ENCODE measurements at regions of chr13 and their contacts with region 1.

Region 1: GRCh38 chr13:42039946-42040729 is 8.3 kb upstream of the DGKH start:
- DNase-seq: peak; percentile 76
- ATAC-seq: peak; percentile 61
- H3K4me3 ChIP-seq: peak overlapping the region; percentile 77
- H3K27ac ChIP-seq: peak overlapping the region; percentile 67
- H3K4me1 ChIP-seq: peaks cover 22% of the 10 kb centered on the region
- H3K27me3 ChIP-seq: no peaks in the 10 kb centered on the region
- CTCF ChIP-seq: no peak

Region 2: GRCh38 chr13:41827507-41828213 is 212.5 kb before region 1 on chr13:
- CTCF ChIA-PET with region 1: no interaction called
- POLR2A ChIA-PET with region 1: no interaction called
- intact Hi-C with region 1: loop called (anchors 10 kb)
- DNase-seq: peak; percentile 88
- ATAC-seq: peak; percentile 96
- H3K4me3 ChIP-seq: no peak overlapping the region
- H3K27ac ChIP-seq: peak overlapping the region; percentile 53
- H3K4me1 ChIP-seq: peaks cover 20% of the 10 kb centered on the region
- H3K27me3 ChIP-seq: no peaks in the 10 kb centered on the region
- CTCF ChIP-seq: no peak

Region 3: DNA sequence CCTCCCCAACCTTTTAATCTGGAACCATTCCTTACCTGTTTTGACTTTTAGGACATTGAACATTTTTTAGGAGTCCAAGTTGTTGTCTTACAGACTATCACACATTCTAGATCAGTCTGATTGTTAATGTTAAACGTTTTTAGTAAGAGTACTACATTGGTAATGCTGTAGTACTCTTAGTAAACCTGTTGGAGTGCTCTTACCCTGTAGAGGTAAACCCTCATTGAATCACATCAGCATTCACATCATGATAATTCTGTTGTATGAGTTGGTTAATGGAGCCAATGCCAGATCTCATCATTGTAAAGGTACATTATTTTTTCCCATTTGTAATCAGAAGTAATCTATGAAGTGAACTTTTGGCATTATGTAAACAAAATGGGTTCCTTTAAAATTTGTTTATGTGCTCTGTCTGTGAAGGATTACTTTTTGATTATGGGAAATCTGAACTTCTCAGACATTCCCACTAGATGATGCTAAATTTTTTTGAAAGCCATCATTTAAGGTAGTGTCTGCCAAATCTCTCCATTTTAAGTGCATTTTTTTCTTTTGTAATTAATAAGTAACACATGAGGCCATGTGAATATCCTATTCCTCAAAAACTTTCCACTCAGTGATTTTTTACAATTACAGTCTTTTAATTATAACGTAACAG is 134.4 kb before region 1 on chr13:
- CTCF ChIA-PET with region 1: interaction called, 3 read pairs
- POLR2A ChIA-PET with region 1: interaction called, 4 read pairs
- intact Hi-C with region 1: loop called (anchors 1 kb)
- DNase-seq: peak; percentile 54
- ATAC-seq: peak; percentile 85
- H3K4me3 ChIP-seq: no peak overlapping the region
- H3K27ac ChIP-seq: no peak overlapping the region
- H3K4me1 ChIP-seq: no peaks in the 10 kb centered on the region
- H3K27me3 ChIP-seq: no peaks in the 10 kb centered on the region
- CTCF ChIP-seq: peak; percentile 72

Region 4: DNA sequence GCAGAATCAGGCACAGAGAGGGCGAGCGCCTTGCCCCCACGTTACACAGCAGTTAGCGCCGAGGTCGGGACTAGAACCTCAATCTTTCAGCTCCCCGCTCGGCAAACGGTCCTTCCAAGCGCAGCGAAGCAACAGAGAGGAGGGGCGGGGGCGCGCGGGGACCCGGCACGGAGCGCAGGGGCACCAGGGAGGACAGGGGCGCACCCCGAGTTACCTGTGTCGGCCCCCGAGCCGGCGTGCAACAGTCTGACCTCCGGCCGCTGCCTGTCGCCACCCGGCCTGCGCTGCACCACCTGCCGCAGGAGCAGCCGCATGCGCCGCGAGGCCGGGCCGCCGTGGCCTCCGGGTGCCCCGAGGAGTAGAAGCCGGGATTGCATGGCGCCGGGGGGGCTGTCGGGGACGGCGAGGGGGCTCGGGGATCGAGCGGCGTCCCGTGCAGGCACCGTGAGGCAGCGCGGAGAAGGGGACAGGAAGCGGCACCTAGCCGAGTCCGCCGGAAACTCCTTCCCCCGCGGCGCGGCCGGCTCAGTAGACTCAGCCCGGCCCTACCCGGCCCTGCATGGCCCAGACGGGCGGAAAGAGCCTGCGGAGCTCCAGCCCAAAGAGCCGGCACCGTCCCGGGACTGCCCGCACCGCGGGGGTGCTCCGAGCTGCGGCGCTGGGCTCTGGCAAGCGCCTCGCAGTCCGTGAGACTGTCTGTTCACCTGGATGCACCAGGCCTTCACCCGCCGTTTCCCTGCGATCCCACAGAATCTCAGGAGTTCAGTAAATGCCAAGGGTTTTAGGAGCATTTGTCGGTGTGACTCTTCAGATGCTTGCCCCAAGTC is 79.3 kb before region 1 on chr13 and contains the start of gene VWA8:
- CTCF ChIA-PET with region 1: no interaction called
- POLR2A ChIA-PET with region 1: no interaction called
- intact Hi-C with region 1: loop called (anchors 2 kb)
- DNase-seq: peak; percentile 77
- ATAC-seq: peak; percentile 95
- H3K4me3 ChIP-seq: peak within 1 kb of the TSS; percentile 79
- H3K27ac ChIP-seq: peak within 1 kb of the TSS; percentile 58
- H3K4me1 ChIP-seq: peaks cover 19% of the 10 kb centered on the region
- H3K27me3 ChIP-seq: no peaks in the 10 kb centered on the region
- CTCF ChIP-seq: no peak
- total RNA-seq, gene VWA8: 10.0 and 12.2 TPM in 2 replicates

Region 5: DNA sequence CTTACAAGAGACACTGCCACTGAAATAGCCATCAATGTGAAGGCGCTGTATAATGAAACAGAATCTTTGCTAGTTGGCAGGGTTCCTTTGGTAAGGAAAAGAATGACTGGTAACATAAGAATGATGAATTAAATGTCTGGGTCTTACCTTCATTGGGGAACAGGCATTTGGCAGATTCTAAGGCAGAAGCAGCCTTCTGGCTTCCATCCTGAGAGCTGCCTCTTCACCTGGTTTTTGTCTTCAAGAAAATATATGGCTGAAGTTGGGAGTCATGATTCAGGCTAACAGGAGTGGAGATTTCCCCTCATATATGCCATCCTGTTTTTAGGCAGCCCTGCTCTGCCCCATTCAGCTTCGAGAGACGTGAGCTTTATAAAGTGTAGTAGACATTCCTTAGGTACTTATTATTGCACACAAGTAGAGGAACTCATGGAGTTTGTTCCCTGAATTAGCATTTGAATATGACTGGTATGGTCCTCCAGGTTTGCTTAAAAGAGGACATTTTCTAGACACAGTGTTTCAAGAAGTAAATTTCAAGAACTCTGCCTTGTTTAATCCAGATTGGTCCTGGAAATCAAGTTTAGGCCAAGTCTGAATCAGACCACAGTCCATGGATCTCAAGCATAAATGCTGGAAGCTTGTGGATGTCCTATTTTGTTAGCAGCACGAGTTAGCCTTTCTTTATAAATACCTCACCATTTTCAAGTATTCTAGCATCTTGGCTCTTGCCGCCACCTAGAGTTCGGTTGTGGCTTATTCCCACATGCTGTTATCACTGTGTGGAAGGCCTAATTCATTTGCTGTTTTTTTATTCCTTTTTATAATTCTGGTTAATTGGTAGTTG is 175.7 kb after region 1 on chr13:
- CTCF ChIA-PET with region 1: no interaction called
- POLR2A ChIA-PET with region 1: no interaction called
- intact Hi-C with region 1: loop called (anchors 10 kb)
- DNase-seq: peak; percentile 53
- ATAC-seq: peak; percentile 80
- H3K4me3 ChIP-seq: no peak overlapping the region
- H3K27ac ChIP-seq: no peak overlapping the region
- H3K4me1 ChIP-seq: peaks cover 20% of the 10 kb centered on the region
- H3K27me3 ChIP-seq: no peaks in the 10 kb centered on the region
- CTCF ChIP-seq: peak; percentile 77

Measured in PC-3 (cell line).